ENCODE measurements at regions of chr2 and their contacts with region 1.

Region 1: GRCh38 chr2:15577071-15577735 is 14.5 kb upstream of the DDX1 start:
- DNase-seq: peak; percentile 87
- H3K4me3 ChIP-seq: no peak overlapping the region
- H3K27ac ChIP-seq: no peak overlapping the region
- H3K4me1 ChIP-seq: no peaks in the 10 kb centered on the region
- H3K27me3 ChIP-seq: no peaks in the 10 kb centered on the region
- CTCF ChIP-seq: peak; percentile 84

Region 2: GRCh38 chr2:15031745-15032240 is 545.4 kb before region 1 on chr2:
- CTCF ChIA-PET with region 1: no interaction called
- POLR2A ChIA-PET with region 1: no interaction called
- intact Hi-C with region 1: loop called (anchors 10 kb)
- DNase-seq: no peak
- H3K4me3 ChIP-seq: no peak overlapping the region
- H3K27ac ChIP-seq: no peak overlapping the region
- H3K4me1 ChIP-seq: no peaks in the 10 kb centered on the region
- H3K27me3 ChIP-seq: peaks cover 4% of the 10 kb centered on the region
- CTCF ChIP-seq: no peak

Region 3: GRCh38 chr2:15177103-15177502 is 400.1 kb before region 1 on chr2:
- CTCF ChIA-PET with region 1: no interaction called
- POLR2A ChIA-PET with region 1: no interaction called
- intact Hi-C with region 1: loop called (anchors 10 kb)
- DNase-seq: peak; percentile 27
- H3K4me3 ChIP-seq: no peak overlapping the region
- H3K27ac ChIP-seq: no peak overlapping the region
- H3K4me1 ChIP-seq: no peaks in the 10 kb centered on the region
- H3K27me3 ChIP-seq: no peaks in the 10 kb centered on the region
- CTCF ChIP-seq: no peak

Region 4: DNA sequence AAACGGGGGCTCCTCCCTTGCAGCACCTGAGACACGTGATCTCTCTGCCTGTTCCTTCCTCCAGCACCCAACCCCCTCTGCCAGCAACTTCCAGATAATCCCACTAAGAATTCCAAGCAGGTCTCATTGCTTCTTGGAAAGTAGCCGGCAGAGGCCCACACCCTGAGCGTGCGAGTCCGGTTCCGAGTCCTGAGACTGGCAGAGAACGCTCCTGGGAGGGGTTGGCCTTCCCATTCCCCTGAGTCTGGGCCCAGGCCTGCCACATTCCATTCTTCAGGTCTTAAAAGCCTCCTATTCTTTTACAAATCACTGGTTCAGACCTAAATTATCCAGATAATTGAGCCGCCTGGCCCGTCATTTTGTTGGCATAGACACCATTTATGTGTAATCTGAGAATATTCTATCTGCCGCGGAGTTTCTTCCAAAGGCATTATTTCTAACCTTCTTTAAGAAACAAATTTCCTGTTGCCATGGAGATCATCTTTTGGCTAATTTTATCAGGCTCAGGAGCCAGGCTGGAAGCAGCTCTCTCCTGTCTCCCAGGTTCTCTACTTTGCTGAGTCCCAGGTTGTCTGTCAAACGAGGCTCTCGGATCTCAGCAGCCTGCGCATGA is 528.6 kb after region 1 on chr2:
- CTCF ChIA-PET with region 1: no interaction called
- POLR2A ChIA-PET with region 1: no interaction called
- intact Hi-C with region 1: no loop called
- DNase-seq: no peak
- H3K4me3 ChIP-seq: no peak overlapping the region
- H3K27ac ChIP-seq: no peak overlapping the region
- H3K4me1 ChIP-seq: no peaks in the 10 kb centered on the region
- H3K27me3 ChIP-seq: no peaks in the 10 kb centered on the region
- CTCF ChIP-seq: no peak